ENCODE measurements at regions of chr12 and their contacts with region 1.

Region 1: DNA sequence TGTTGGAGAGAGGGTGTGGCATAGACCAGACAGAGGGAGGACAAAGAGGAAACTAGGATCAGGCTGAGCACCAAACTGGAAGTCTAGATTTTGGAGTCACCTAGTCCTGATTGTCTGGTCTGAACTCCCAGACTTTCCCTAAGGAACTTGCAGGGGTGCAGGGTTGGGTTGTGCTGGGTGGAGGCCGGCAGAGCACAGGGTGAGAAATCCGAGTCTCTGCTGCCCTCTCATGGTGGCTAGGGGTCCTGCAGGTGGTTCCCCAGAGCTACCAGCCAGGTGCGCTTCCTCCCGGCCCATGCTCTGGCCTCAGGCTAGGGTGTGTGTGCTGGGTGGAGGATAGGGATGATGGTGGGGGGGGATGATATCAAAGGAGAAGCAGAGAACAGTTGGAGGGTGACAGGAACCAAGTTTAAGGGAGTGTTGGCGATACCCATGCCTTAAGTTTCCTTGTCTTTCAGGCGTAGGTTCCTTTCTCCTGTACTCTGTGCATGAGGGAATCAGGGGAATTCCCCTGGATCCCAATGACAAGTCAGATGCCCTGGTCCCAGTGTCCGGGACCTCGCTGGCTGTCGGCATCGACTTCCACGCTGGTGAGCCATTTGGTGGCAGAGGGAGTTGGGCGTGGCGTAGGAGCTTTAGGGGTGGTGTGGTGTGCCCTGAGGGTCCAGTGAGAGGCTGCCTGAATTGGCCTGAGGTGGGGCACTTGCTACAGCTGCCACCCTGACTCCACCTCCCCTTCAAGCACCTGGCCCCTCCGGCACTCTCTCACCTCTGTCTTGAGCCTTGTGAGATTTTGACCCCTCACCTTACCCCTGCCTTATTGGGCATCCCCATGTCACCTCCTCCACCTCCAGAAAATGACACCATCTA is 33.4 kb upstream of the NXPH4 start:
- DNase-seq: peak; percentile 49 to 75 (median 63)
- H3K4me3 ChIP-seq: no peak overlapping the region
- H3K27ac ChIP-seq: no peak overlapping the region
- H3K4me1 ChIP-seq: no peaks in the 10 kb centered on the region
- H3K27me3 ChIP-seq: peaks cover 0 to 3% (median 0%) of the 10 kb centered on the region in 5 experiments

Region 2: DNA sequence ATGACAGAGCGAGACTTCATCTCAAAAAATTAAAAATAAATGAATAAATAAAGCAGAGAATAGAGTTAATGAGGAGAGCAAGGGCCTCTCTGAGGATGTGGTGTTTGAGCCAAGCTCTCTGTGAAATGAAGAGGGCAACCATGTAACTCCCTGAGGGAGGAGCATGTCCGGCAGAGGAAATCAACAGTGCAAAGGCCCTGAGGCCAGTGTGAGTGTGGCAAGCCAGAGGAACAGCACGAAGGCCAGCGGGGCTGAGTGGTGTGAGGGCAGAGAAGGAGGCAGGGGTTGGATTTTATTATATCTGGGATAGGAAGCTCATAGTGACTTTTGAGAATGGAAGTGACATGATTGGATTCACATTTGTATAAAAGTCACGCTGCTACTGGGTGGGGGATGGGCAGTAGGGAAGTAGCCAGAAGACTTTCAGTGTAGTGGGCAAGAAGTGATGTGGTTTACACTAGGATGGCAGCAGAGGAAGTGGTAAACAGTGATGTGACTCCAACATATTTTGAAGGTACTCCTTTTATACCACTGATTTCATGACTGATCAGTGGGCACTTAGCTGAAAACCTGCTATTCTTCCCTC is 25.5 kb before region 1 on chr12:
- CTCF ChIA-PET with region 1: interaction called, 10 read pairs
- POLR2A ChIA-PET with region 1: no interaction called
- DNase-seq: peak; percentile 49 to 90 (median 90)
- H3K4me3 ChIP-seq: no peak overlapping the region
- H3K27ac ChIP-seq: no peak overlapping the region
- H3K4me1 ChIP-seq: peaks cover 2 to 58% (median 19%) of the 10 kb centered on the region in 4 experiments
- H3K27me3 ChIP-seq: no peaks in the 10 kb centered on the region

Region 3: DNA sequence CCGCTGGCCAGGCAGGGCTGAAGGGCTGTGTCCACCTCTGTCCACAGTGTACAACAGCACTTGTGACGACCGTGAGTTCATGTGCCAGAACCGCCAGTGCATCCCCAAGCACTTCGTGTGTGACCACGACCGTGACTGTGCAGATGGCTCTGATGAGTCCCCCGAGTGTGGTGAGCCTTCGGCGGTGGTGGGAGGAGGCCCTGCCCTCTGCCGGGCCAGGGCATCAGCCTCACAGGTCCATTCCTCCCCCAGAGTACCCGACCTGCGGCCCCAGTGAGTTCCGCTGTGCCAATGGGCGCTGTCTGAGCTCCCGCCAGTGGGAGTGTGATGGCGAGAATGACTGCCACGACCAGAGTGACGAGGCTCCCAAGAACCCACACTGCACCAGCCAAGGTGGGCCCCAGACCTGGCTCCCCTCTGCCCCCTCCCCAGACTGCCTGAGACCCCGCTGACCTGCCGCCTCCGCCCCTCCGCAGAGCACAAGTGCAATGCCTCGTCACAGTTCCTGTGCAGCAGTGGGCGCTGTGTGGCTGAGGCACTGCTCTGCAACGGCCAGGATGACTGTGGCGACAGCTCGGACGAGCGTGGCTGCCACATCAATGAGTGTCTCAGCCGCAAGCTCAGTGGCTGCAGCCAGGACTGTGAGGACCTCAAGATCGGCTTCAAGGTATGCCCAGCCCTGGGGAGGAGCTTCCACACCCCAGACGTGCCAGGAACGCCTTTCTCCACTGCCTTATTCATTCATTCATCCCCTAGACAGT is 12.6 kb after region 1 on chr12:
- CTCF ChIA-PET with region 1: interaction called, 182 read pairs
- POLR2A ChIA-PET with region 1: no interaction called
- DNase-seq: peak in 2 of 3 donors; percentile 40 to 53
- H3K4me3 ChIP-seq: no peak overlapping the region
- H3K27ac ChIP-seq: no peak overlapping the region
- H3K4me1 ChIP-seq: no peaks in the 10 kb centered on the region
- H3K27me3 ChIP-seq: no peaks in the 10 kb centered on the region